ENCODE measurements at regions of chr1 and their contacts with region 1.

Region 1: GRCh38 chr1:178542560-178543356 is 29.8 kb downstream of the TEX35 start:
- DNase-seq: peak; percentile 94
- H3K4me3 ChIP-seq: peak overlapping the region; percentile 62 to 98 (median 71)
- H3K27ac ChIP-seq: peak overlapping the region; percentile 89 to 96 (median 92)
- H3K4me1 ChIP-seq: peaks cover 15 to 34% (median 21%) of the 10 kb centered on the region in 4 donors
- H3K27me3 ChIP-seq: no peaks in the 10 kb centered on the region
- CTCF ChIP-seq: peak; percentile 99 to 100 (median 100)
- EP300 ChIP-seq: no peak
- POLR2A ChIP-seq: peak; percentile 11

Region 2: GRCh38 chr1:178397678-178398077 is 145.1 kb before region 1 on chr1:
- in situ Hi-C with region 1: no loop called
- intact Hi-C with region 1: no loop called
- DNase-seq: no peak
- H3K4me3 ChIP-seq: no peak overlapping the region
- H3K27ac ChIP-seq: no peak overlapping the region
- H3K4me1 ChIP-seq: peaks cover 0 to 3% (median 1%) of the 10 kb centered on the region in 4 donors
- H3K27me3 ChIP-seq: no peaks in the 10 kb centered on the region
- CTCF ChIP-seq: no peak
- EP300 ChIP-seq: no peak
- POLR2A ChIP-seq: no peak

Region 3: DNA sequence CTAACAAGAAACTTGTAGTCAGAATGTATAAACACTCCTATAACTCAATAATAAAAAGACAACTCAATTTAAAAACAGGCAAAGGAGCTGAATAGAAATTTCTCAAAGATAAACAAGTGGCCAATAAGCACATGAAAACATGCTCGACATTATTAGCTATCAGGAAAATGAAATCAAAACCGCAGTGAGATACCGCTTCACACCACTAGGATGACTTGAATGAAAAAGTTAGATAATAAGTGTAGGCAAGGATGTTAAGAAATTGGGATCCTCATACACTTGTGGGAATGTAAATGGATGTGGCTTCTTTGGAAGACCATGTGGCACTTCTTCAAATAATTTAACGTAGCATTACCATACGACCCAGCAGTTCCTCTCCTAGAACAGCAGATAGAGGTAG is 191.2 kb after region 1 on chr1:
- in situ Hi-C with region 1: loop called in 1 of 4 experiments (anchors 10 kb)
- intact Hi-C with region 1: no loop called
- DNase-seq: no peak
- H3K4me3 ChIP-seq: no peak overlapping the region
- H3K27ac ChIP-seq: no peak overlapping the region
- H3K4me1 ChIP-seq: peaks cover 0 to 6% (median 3%) of the 10 kb centered on the region in 4 donors
- H3K27me3 ChIP-seq: no peaks in the 10 kb centered on the region
- CTCF ChIP-seq: peak; percentile 19 to 30 (median 23)
- EP300 ChIP-seq: no peak
- POLR2A ChIP-seq: no peak

Region 4: GRCh38 chr1:178749581-178750166 is 206.9 kb after region 1 on chr1:
- in situ Hi-C with region 1: loop called in 3 of 4 experiments (anchors 10 kb)
- intact Hi-C with region 1: loop called (anchors 2 kb)
- DNase-seq: no peak
- H3K4me3 ChIP-seq: no peak overlapping the region
- H3K27ac ChIP-seq: no peak overlapping the region
- H3K4me1 ChIP-seq: peaks cover 0 to 8% (median 2%) of the 10 kb centered on the region in 4 donors
- H3K27me3 ChIP-seq: no peaks in the 10 kb centered on the region
- CTCF ChIP-seq: no peak
- EP300 ChIP-seq: no peak
- POLR2A ChIP-seq: no peak

Region 5: DNA sequence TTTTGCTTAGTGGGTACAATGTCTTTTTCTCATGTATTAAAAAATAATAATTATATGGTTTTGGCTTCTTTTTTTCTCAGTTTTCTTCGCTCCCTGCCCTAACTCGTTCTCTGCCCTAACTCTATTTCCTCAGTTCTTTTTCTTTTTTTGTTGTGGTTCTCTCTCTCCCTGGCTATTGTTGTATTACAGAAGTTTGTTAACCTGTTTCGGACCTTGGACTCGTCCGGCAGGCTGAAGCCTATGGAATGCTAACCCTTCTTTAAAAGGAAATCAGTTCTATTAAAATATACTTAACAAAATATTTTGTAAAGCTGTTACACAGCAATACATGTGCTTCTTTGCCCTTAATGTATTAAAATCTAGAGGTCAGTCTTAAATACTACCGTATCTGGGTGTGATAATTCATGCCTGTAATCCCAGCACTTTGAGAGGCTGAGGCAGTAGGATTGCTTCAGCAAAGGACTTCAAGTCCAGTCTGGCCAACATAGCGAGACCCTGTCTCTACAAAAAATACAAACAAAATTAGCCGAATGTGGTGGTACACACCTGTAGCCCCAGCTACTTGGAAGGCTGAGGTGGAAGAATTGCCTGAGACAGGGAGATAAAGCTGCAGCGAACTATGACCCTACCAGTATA is 264.0 kb after region 1 on chr1:
- in situ Hi-C with region 1: no loop called
- intact Hi-C with region 1: no loop called
- DNase-seq: no peak
- H3K4me3 ChIP-seq: no peak overlapping the region
- H3K27ac ChIP-seq: no peak overlapping the region
- H3K4me1 ChIP-seq: no peaks in the 10 kb centered on the region
- H3K27me3 ChIP-seq: no peaks in the 10 kb centered on the region
- CTCF ChIP-seq: no peak
- EP300 ChIP-seq: no peak
- POLR2A ChIP-seq: no peak

Measured in transverse colon (tissue), 4 donors.